WTC11 (cell line): ENCODE measurements at regions of chr14 and their contacts with region 1.

Region 1: GRCh38 chr14:23160924-23161538 is 22.4 kb downstream of the SLC7A8 start:
- DNase-seq: peak; percentile 88
- ATAC-seq: peak; percentile 94
- H3K4me3 Mint-ChIP-seq: peak overlapping the region; percentile 53
- H3K27ac Mint-ChIP-seq: peak overlapping the region; percentile 98
- H3K4me1 Mint-ChIP-seq: peaks cover 65% of the 10 kb centered on the region
- H3K27me3 Mint-ChIP-seq: no peaks in the 10 kb centered on the region
- CTCF ChIP-seq: no peak

Region 2: DNA sequence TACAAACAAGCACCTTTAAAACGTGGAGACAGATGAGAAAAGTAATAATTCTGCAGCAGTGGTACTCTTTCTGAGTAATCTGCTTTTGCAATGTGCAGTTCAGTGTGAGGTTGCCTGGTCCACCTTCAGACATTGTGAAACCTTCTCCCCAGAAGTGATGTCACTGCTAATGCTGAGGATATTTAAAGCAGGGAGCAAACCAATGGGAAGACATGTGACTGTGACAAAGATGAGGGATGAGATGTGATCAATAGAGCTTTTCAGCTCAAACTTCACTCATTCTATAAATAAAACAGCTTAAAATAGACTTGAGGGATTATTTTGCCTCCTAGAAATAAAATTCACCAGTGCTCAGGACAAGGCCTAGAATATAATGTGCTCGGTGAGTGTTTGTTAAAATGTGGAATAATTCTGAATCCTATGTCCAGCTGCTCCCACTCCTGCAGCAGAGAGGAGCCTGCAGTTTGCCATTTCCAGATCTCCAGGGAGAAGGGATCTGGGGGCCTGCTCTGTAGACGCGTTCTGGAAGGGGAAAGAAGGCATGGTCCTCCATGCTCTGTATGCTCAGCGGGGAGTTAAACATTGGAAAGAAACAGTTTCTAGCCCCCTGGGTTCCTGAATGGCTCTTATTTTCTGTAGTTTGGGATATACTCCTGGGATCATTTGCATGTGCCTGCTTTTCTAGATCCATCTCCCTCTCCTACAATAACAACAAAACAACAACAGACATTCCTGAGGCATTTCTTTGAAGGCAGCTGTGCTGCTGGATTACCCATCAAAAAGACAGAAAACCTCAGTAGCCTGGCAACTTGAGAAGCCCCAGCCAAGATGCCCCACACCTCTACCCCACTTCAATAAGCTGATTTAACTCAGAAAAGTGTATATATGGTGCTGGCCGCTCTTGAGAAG is 13.5 kb after region 1 on chr14:
- CTCF ChIA-PET with region 1: interaction called, 8 read pairs
- POLR2A ChIA-PET with region 1: interaction called, 10 read pairs
- DNase-seq: no peak
- ATAC-seq: peak; percentile 81
- H3K4me3 Mint-ChIP-seq: peak overlapping the region; percentile 12; the same call in 1 of the 2 replicates
- H3K27ac Mint-ChIP-seq: peak overlapping the region; percentile 92
- H3K4me1 Mint-ChIP-seq: peaks cover 67% of the 10 kb centered on the region
- H3K27me3 Mint-ChIP-seq: no peaks in the 10 kb centered on the region
- CTCF ChIP-seq: no peak

Region 3: DNA sequence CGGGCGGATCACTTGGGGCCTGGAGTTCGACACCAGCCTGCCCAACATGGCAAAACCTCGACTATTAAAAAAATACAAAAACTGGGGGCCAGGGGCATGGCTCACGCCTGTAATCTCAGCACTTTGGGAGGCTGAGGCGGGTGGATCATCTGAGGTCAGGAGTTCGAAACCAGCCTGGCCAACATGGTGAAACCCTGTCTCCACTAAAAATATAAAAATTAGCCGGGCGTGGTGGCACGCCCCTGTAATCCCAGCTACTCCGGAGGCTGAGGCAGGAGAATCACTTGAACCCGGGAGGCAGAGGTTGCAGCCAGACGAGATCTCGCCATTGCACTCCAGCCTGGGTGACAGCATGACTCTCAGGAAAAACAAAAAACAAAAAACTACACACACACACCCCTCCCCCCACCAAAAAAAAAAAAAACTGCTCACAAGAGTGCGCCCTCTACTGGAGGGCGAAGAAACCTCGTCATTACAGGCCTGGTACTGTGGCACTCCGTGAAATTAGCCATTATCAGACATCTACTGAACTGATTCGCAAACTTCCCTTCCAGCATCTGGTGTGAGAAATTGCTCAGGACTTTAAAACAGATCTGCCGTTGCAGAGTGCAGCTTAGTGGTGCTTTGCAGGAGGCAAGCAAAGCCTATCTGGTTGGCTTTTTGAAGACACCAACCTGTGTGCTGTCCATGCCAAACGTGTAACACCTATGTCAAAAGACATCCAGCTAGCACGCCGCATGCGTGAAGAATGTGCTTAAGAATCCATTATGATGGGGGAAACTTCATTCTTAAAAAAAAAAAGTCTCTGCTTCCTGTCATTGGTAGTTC is 133.9 kb after region 1 on chr14:
- CTCF ChIA-PET with region 1: no interaction called
- POLR2A ChIA-PET with region 1: no interaction called
- DNase-seq: peak; percentile 28
- ATAC-seq: peak; percentile 55
- H3K4me3 Mint-ChIP-seq: no peak overlapping the region
- H3K27ac Mint-ChIP-seq: no peak overlapping the region
- H3K4me1 Mint-ChIP-seq: peaks cover 20% of the 10 kb centered on the region
- H3K27me3 Mint-ChIP-seq: peaks cover 99% of the 10 kb centered on the region
- CTCF ChIP-seq: peak; percentile 90